ENCODE measurements at regions of chr7 and their contacts with region 1.

Region 1: GRCh38 chr7:99090771-99091542 is 53.0 kb downstream of the SMURF1 start:
- DNase-seq: no peak
- H3K4me3 ChIP-seq: no peak overlapping the region
- H3K27ac ChIP-seq: no peak overlapping the region
- H3K4me1 ChIP-seq: peaks cover 4% of the 10 kb centered on the region
- H3K27me3 ChIP-seq: no peaks in the 10 kb centered on the region
- CTCF ChIP-seq: no peak

Region 2: GRCh38 chr7:99132595-99133321 is 41.8 kb after region 1 on chr7:
- CTCF ChIA-PET with region 1: no interaction called
- dilution Hi-C with region 1: loop called (anchors 5 kb)
- in situ Hi-C with region 1: no loop called
- intact Hi-C with region 1: no loop called
- DNase-seq: peak; percentile 32
- H3K4me3 ChIP-seq: no peak overlapping the region
- H3K27ac ChIP-seq: peak overlapping the region; percentile 92
- H3K4me1 ChIP-seq: peaks cover 31% of the 10 kb centered on the region
- H3K27me3 ChIP-seq: no peaks in the 10 kb centered on the region
- CTCF ChIP-seq: no peak